Activated T-helper 2 cell treated with anti-CD3 and anti-CD28 coated beads, Interferon-gamma antibody, Interleukin-2, Interleukin-4, amounts not matched to agents 10 μg/mL and 5 μg/mL and 100 μg/mL, durations not matched to agents 14 hours and 24 hours and 36 hours (primary cell): ENCODE measurements at regions of chr10 and their contacts with region 1.

Region 1: DNA sequence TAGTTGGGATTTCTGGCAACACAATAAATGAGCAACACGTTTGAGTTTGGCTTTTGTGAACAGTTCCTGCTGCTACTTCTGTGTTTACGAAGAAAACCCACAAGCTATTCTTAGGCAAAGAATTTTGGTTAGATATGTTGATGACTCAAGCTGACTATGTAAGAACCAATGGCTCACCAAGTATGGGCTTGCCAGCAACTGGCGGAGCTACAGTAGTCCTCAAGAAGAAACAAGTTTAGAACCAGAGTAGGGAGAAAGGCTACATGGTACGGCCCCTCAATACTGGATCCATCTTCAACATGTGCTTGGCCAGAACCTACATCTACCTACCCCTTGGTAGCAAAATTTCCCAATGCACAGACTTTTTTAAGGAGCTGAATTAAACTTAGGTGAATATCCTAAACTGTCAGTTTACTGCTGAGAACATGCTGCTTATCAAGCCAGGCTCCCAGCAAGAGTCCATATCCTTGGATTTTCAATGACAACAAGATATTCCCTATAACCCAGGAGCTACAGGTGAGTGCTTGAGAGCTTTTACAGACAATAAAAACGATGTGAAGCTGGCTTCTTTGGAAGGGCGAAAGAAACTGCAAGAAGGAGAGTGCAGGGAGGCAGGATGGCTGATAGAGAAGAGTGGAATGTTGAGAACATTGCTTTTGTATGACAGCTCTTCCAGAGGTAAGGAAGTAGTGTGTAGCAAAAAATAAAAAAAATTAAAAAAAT is 74.3 kb upstream of the ASAH2 start:
- DNase-seq: peak; percentile 23
- H3K4me3 Mint-ChIP-seq: peak overlapping the region; percentile 60
- H3K27ac Mint-ChIP-seq: no peak overlapping the region
- H3K4me1 Mint-ChIP-seq: peaks cover 79% of the 10 kb centered on the region
- H3K27me3 Mint-ChIP-seq: no peaks in the 10 kb centered on the region

Region 2: DNA sequence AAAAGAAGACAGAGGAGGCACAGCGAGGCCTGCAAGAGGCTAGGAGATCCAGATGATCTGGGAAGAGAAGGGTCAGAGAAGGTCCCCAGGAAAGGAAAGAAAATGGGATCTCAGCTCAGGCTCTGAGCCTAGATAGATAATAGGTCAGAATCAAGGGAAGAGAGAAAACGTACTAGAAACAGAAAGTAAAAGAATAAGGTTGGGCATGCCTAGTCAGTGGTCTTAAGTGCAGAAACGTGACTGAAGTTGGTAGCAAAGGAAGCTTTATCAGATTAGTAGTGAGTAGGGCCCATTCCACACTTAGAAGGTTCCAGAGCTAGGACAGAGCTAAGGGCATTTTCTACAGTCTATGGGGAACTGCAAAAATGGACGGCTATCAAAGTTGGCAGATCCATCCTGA is 10.5 kb after region 1 on chr10:
- intact Hi-C with region 1: no loop called
- DNase-seq: no peak
- H3K4me3 Mint-ChIP-seq: peak overlapping the region; percentile 43
- H3K27ac Mint-ChIP-seq: no peak overlapping the region
- H3K4me1 Mint-ChIP-seq: peaks cover 40% of the 10 kb centered on the region
- H3K27me3 Mint-ChIP-seq: no peaks in the 10 kb centered on the region

Region 3: GRCh38 chr10:50362547-50363125 is 37.0 kb after region 1 on chr10:
- intact Hi-C with region 1: loop called (anchors 5 kb)
- DNase-seq: no peak
- H3K4me3 Mint-ChIP-seq: no peak overlapping the region
- H3K27ac Mint-ChIP-seq: no peak overlapping the region
- H3K4me1 Mint-ChIP-seq: peaks cover 14% of the 10 kb centered on the region
- H3K27me3 Mint-ChIP-seq: no peaks in the 10 kb centered on the region

Region 4: GRCh38 chr10:50375051-50375452 is 49.4 kb after region 1 on chr10:
- intact Hi-C with region 1: no loop called
- DNase-seq: no peak
- H3K4me3 Mint-ChIP-seq: no peak overlapping the region
- H3K27ac Mint-ChIP-seq: no peak overlapping the region
- H3K4me1 Mint-ChIP-seq: peaks cover 7% of the 10 kb centered on the region
- H3K27me3 Mint-ChIP-seq: no peaks in the 10 kb centered on the region

Region 5: DNA sequence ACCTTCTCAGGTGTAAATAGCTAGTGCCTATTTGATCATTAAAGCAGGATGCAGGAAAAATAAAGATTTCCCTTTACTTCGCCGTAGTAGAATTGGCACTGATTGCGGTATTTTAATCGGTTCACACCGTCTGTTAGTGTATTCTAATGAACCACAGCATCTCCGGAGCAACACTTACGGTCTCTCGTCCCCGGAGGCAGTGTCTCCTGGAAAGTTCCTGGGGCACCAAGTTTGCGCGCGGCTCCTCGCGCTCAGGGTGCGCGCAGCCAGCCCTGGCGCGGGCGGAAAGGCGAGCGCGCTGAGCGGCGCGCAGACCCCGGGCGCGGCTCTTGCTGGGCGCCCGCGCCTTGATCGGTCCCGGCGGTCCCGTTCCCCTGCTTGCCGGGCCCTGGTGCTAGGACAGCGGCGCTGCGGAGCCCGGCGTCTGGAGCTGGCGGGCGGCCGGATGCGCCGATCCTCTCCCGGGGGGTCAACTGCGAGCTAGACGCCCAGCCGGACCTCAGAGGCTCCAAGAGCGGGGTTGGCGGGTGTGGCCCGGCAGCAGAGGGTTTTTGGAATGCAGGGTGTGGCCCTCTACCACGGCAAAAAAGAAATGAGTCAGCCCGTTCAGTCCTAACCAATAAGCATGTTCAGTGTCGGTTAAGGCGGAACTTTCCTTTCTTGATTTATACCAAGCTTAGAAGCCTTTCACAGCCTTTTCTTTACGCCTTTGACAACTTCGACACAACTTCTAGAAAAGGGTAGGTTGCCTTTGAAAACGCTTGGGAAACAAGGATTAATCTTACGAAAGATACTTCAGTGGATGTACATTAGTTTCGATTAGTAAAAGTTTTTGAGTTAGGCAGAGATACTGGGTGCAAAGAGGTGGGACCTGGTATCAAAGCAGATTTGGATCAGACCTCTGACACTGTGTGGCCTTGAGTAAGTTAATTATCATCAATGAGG is 92.5 kb after region 1 on chr10:
- intact Hi-C with region 1: loop called (anchors 2 kb)
- DNase-seq: peak; percentile 68
- H3K4me3 Mint-ChIP-seq: peak overlapping the region; percentile 85
- H3K27ac Mint-ChIP-seq: peak overlapping the region; percentile 77
- H3K4me1 Mint-ChIP-seq: peaks cover 50% of the 10 kb centered on the region
- H3K27me3 Mint-ChIP-seq: no peaks in the 10 kb centered on the region